MCF 10A (cell line): ENCODE measurements at regions of chr17 and their contacts with region 1.

Region 1: GRCh38 chr17:29219378-29220047 is 27.1 kb upstream of the CRYBA1 start:
- DNase-seq: peak; percentile 83
- H3K4me3 Mint-ChIP-seq: no peak overlapping the region
- H3K27ac Mint-ChIP-seq: no peak overlapping the region
- H3K4me1 Mint-ChIP-seq: peaks cover 23% of the 10 kb centered on the region
- H3K27me3 Mint-ChIP-seq: no peaks in the 10 kb centered on the region
- CTCF ChIP-seq: peak; percentile 87

Region 2: DNA sequence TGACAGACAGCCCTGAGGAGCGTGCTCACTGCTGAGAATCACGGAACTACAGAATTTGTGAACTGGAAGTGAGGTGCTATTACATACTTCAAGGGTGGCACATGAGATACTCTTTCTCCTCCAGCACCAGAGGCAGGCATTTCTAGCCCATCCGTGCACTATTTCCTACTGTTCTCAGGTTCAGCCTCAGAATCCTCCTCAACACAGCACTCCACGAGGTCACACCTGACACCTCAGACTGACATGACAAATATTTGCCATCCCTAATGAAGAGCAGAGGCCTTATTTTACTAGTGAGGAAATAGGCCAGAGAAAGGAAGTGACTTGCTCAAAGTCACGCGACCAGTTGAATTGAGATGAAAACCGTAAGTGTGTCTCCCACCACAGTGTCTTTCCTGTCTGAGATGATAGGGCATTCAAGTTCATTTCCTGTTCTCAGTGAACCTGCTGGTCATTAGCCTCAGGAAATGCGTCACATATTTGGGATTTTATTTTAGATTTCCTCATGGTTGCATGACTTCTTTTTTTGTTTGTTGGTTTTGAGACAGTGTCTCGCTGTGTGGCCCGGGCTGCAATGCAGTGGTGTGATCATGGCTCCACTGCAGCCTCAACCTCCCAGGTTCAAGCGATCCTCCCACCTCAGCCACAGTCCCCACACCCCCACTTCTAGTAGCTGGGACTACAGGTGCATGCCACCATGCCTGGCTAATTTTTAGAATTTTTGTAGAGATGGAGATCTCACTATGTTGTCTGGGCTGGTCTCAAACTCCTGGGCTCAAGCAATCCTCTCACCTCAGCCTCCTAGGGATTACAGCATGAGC is 237.2 kb before region 1 on chr17:
- CTCF ChIA-PET with region 1: no interaction called
- POLR2A ChIA-PET with region 1: no interaction called
- intact Hi-C with region 1: no loop called
- DNase-seq: no peak
- H3K4me3 Mint-ChIP-seq: no peak overlapping the region
- H3K27ac Mint-ChIP-seq: no peak overlapping the region
- H3K4me1 Mint-ChIP-seq: no peaks in the 10 kb centered on the region
- H3K27me3 Mint-ChIP-seq: no peaks in the 10 kb centered on the region
- CTCF ChIP-seq: no peak

Region 3: DNA sequence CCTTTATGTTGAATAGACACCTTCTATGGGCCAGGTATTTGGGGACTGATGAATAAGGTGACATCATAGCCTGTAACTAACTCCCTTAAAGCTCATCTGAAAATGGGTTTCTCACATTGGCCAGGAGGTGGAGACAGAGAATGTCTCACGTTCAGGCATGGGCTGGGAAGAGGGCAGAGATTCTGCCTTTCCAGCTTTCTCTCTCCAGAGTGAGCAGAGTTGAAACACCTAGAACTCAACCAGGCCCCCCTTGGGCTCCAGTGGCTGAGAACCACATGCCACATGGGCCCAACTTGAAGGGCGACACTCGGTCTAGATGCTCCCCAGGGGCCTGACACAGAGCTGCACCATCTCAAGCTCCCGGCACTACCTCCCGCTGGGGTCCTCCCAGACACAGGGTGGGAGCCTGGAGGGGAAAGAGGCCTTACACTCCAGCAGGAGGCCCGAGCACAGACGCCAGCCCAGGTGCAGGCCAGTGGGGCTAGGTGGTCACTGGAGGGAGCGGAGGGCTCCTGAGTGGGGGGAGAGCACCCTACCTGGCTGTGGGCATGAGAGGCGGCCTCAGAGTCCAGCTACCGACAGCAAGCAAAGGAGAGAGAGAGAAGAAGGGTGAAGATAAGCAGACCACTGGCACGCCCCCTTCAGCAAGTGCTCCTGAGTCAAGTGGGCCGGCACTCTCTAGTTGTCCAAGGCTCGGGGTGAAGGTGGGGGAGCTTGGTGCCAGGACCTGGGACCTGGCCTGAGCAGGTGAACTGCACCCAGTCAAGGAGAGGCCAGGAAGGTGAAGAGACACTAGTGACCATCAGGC is 95.2 kb before region 1 on chr17:
- CTCF ChIA-PET with region 1: interaction called, 18 read pairs
- POLR2A ChIA-PET with region 1: interaction called, 4 read pairs
- intact Hi-C with region 1: no loop called
- DNase-seq: peak; percentile 83
- H3K4me3 Mint-ChIP-seq: no peak overlapping the region
- H3K27ac Mint-ChIP-seq: peak overlapping the region; percentile 82
- H3K4me1 Mint-ChIP-seq: peaks cover 13% of the 10 kb centered on the region
- H3K27me3 Mint-ChIP-seq: no peaks in the 10 kb centered on the region
- CTCF ChIP-seq: peak; percentile 77

Region 4: GRCh38 chr17:29162738-29163341 is 56.7 kb before region 1 on chr17:
- CTCF ChIA-PET with region 1: interaction called, 10 read pairs
- POLR2A ChIA-PET with region 1: no interaction called
- intact Hi-C with region 1: no loop called
- DNase-seq: no peak
- H3K4me3 Mint-ChIP-seq: no peak overlapping the region
- H3K27ac Mint-ChIP-seq: no peak overlapping the region
- H3K4me1 Mint-ChIP-seq: peaks cover 16% of the 10 kb centered on the region
- H3K27me3 Mint-ChIP-seq: no peaks in the 10 kb centered on the region
- CTCF ChIP-seq: no peak

Region 5: GRCh38 chr17:29233301-29233700 is 13.8 kb after region 1 on chr17:
- CTCF ChIA-PET with region 1: interaction called, 55 read pairs
- POLR2A ChIA-PET with region 1: no interaction called
- intact Hi-C with region 1: no loop called
- DNase-seq: no peak
- H3K4me3 Mint-ChIP-seq: no peak overlapping the region
- H3K27ac Mint-ChIP-seq: no peak overlapping the region
- H3K4me1 Mint-ChIP-seq: peaks cover 12% of the 10 kb centered on the region
- H3K27me3 Mint-ChIP-seq: no peaks in the 10 kb centered on the region
- CTCF ChIP-seq: no peak

Region 6: GRCh38 chr17:29252101-29252866 is 32.8 kb after region 1 on chr17:
- CTCF ChIA-PET with region 1: interaction called, 22 read pairs
- POLR2A ChIA-PET with region 1: interaction called, 4 read pairs
- intact Hi-C with region 1: no loop called
- DNase-seq: no peak
- H3K4me3 Mint-ChIP-seq: no peak overlapping the region
- H3K27ac Mint-ChIP-seq: peak overlapping the region; percentile 22
- H3K4me1 Mint-ChIP-seq: peaks cover 30% of the 10 kb centered on the region
- H3K27me3 Mint-ChIP-seq: no peaks in the 10 kb centered on the region
- CTCF ChIP-seq: peak; percentile 62